GM12878 (cell line): ENCODE measurements at regions of chr4 and their contacts with region 1.

Region 1: DNA sequence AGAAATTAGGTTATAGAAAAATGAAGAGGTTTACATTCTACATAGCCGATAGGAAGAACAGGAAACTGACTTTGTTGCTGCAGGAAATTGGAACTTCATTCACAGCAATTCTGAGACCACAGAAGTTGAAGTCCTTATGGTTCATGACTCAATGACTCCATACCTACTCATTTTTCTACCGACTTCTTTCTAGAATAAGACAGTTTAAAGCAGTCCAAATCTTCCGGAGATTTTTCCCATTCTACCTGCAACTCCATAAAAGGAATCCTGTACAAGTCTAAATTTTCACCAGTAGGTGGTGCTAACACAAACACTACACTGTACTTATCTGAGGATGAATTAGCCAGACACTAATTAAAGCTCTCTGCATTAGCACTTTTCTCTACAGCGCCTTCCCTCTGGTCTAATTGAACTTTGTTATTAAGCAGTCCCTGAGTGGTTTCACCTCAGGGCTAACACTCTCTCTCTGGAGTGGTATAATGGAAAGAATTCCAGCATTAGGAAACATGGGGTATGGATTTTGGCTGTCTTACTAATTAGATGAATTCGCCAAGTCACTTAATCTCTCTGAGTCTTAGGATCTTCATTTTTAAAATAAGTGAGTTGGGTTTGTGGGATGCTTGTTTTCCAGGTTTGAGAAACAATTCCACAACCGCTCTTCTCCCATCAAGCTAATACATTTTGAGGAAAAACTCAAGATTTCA is 167.9 kb downstream of the SMIM20 start:
- DNase-seq: no peak
- ATAC-seq: peak; percentile 76
- H3K4me3 ChIP-seq: no peak overlapping the region
- H3K27ac ChIP-seq: no peak overlapping the region
- H3K4me1 ChIP-seq: peaks cover 44% of the 10 kb centered on the region
- H3K27me3 ChIP-seq: no peaks in the 10 kb centered on the region
- CTCF ChIP-seq: peak; percentile 56 to 61 (median 61)
- EP300 ChIP-seq: no peak
- POLR2A ChIP-seq: no peak
- RAD21 ChIP-seq: peak; percentile 74

Region 2: GRCh38 chr4:25738162-25738561 is 343.8 kb before region 1 on chr4:
- CTCF ChIA-PET with region 1: no interaction called
- POLR2A ChIA-PET with region 1: no interaction called
- RAD21 ChIA-PET with region 1: no interaction called
- SMC1A ChIA-PET with region 1: no interaction called
- in situ Hi-C with region 1: no loop called
- intact Hi-C with region 1: no loop called
- DNase-seq: no peak
- ATAC-seq: no peak
- H3K4me3 ChIP-seq: no peak overlapping the region
- H3K27ac ChIP-seq: no peak overlapping the region
- H3K4me1 ChIP-seq: no peaks in the 10 kb centered on the region
- H3K27me3 ChIP-seq: no peaks in the 10 kb centered on the region
- CTCF ChIP-seq: no peak
- EP300 ChIP-seq: no peak
- POLR2A ChIP-seq: no peak
- RAD21 ChIP-seq: no peak

Region 3: GRCh38 chr4:26061248-26061986 is 20.5 kb before region 1 on chr4:
- CTCF ChIA-PET with region 1: interaction called, 20 read pairs
- POLR2A ChIA-PET with region 1: no interaction called
- RAD21 ChIA-PET with region 1: interaction called, 6 read pairs
- SMC1A ChIA-PET with region 1: interaction called, 13 read pairs
- in situ Hi-C with region 1: no loop called
- intact Hi-C with region 1: no loop called
- DNase-seq: no peak
- ATAC-seq: peak; percentile 96
- H3K4me3 ChIP-seq: no peak overlapping the region
- H3K27ac ChIP-seq: no peak overlapping the region
- H3K4me1 ChIP-seq: peaks cover 9% of the 10 kb centered on the region; the same call in 1 of the 2 replicates
- H3K27me3 ChIP-seq: no peaks in the 10 kb centered on the region; a peak in 3 of 4 replicates
- CTCF ChIP-seq: peak; percentile 64 to 76 (median 76); a peak in 5 of 6 replicates
- EP300 ChIP-seq: no peak
- POLR2A ChIP-seq: no peak
- RAD21 ChIP-seq: peak; percentile 94

Region 4: DNA sequence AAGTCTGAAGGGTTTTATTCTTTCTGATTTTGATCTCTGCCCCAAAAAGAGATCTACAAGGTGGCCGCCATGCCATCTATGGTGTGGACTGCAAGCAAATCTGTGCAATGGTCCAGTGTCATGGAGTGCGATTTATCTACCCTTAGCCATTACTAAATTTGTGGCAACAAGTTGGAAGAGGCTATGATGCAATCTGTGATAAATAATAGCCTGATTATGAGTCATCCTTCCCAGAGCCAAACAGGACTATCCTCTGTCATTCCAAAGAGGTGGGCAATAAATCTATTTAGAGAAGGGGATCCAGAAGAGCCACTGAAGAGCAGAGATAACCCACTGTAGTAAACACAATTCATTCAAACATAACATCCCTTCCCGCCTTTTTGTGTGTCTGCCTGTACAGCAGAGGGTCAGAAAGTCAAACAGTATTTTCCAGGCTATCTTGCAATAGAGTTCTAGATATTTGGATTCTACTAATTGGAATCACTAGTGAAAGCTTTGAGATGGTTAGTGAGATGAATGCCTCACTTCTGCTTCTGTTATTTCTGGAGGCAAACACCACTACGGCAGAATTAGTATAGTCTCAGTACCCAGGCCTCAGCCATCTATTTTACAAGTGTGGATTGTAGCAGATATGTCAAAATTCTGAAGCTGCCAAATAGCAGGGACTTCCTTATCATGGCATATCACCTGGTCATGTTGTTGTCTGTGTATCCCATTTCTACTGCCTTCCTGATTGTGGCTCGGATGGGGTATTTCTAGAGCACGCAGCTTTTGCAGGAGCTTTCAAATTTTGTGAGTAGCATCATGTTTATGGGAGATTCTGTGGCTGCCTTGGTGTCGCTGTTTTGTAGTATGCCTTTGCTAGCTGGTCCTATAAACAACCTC is 24.1 kb after region 1 on chr4:
- CTCF ChIA-PET with region 1: interaction called, 13 read pairs
- POLR2A ChIA-PET with region 1: no interaction called
- RAD21 ChIA-PET with region 1: no interaction called
- SMC1A ChIA-PET with region 1: interaction called, 4 read pairs
- in situ Hi-C with region 1: no loop called
- intact Hi-C with region 1: no loop called
- DNase-seq: no peak
- ATAC-seq: no peak
- H3K4me3 ChIP-seq: no peak overlapping the region
- H3K27ac ChIP-seq: no peak overlapping the region
- H3K4me1 ChIP-seq: no peaks in the 10 kb centered on the region
- H3K27me3 ChIP-seq: no peaks in the 10 kb centered on the region
- CTCF ChIP-seq: no peak
- EP300 ChIP-seq: no peak
- POLR2A ChIP-seq: no peak
- RAD21 ChIP-seq: no peak

Region 5: GRCh38 chr4:26179316-26179760 is 97.4 kb after region 1 on chr4:
- CTCF ChIA-PET with region 1: interaction called, 12 read pairs
- POLR2A ChIA-PET with region 1: interaction called, 3 read pairs
- RAD21 ChIA-PET with region 1: interaction called, 16 read pairs
- SMC1A ChIA-PET with region 1: interaction called, 5 read pairs
- in situ Hi-C with region 1: loop called (anchors 5 kb)
- intact Hi-C with region 1: loop called (anchors 5 kb)
- DNase-seq: peak; percentile 52
- ATAC-seq: peak; percentile 81
- H3K4me3 ChIP-seq: no peak overlapping the region
- H3K27ac ChIP-seq: no peak overlapping the region
- H3K4me1 ChIP-seq: peaks cover 19% of the 10 kb centered on the region
- H3K27me3 ChIP-seq: no peaks in the 10 kb centered on the region
- CTCF ChIP-seq: peak in 2 of 3 experiments; percentile 22 to 23; a peak in 2 of 6 replicates
- EP300 ChIP-seq: peak; percentile 70 to 77; a peak in 2 of 4 replicates
- POLR2A ChIP-seq: no peak
- RAD21 ChIP-seq: peak; percentile 62

Region 6: GRCh38 chr4:26288355-26288909 is 206.5 kb after region 1 on chr4:
- CTCF ChIA-PET with region 1: interaction called, 3 read pairs
- POLR2A ChIA-PET with region 1: interaction called, 12 read pairs
- RAD21 ChIA-PET with region 1: interaction called, 3 read pairs
- SMC1A ChIA-PET with region 1: no interaction called
- in situ Hi-C with region 1: no loop called
- intact Hi-C with region 1: no loop called
- DNase-seq: peak; percentile 73
- ATAC-seq: peak; percentile 91
- H3K4me3 ChIP-seq: no peak overlapping the region
- H3K27ac ChIP-seq: peak overlapping the region; percentile 79
- H3K4me1 ChIP-seq: peaks cover 15% of the 10 kb centered on the region
- H3K27me3 ChIP-seq: no peaks in the 10 kb centered on the region
- CTCF ChIP-seq: no peak
- EP300 ChIP-seq: 0 out of 4 replicates have a peak, but pooled peaks of 1 of the 2 experiments have one; percentile 14
- POLR2A ChIP-seq: 0 out of 2 replicates have a peak, but pooled peaks have one; percentile 29
- RAD21 ChIP-seq: no peak

Region 7: GRCh38 chr4:26330186-26330787 is 248.3 kb after region 1 on chr4:
- CTCF ChIA-PET with region 1: interaction called, 127 read pairs
- POLR2A ChIA-PET with region 1: interaction called, 6 read pairs
- RAD21 ChIA-PET with region 1: interaction called, 76 read pairs
- SMC1A ChIA-PET with region 1: interaction called, 97 read pairs
- in situ Hi-C with region 1: no loop called
- intact Hi-C with region 1: loop called (anchors 1 kb)
- DNase-seq: no peak
- ATAC-seq: peak; percentile 88
- H3K4me3 ChIP-seq: no peak overlapping the region
- H3K27ac ChIP-seq: no peak overlapping the region
- H3K4me1 ChIP-seq: no peaks in the 10 kb centered on the region
- H3K27me3 ChIP-seq: no peaks in the 10 kb centered on the region
- CTCF ChIP-seq: peak; percentile 53 to 66 (median 58)
- EP300 ChIP-seq: no peak
- POLR2A ChIP-seq: no peak
- RAD21 ChIP-seq: peak; percentile 71